CD4-positive, alpha-beta memory T cell (primary cell): ENCODE measurements at regions of chr1 and their contacts with region 1.

Region 1: GRCh38 chr1:115595279-115596079 is 46.3 kb upstream of the VANGL1 start:
- DNase-seq: peak in 4 of 5 donors; percentile 14 to 46 (median 24)
- H3K4me3 ChIP-seq: no peak overlapping the region
- H3K4me3 Mint-ChIP-seq: no peak overlapping the region
- H3K27ac ChIP-seq: no peak overlapping the region
- H3K27ac Mint-ChIP-seq: no peak overlapping the region
- H3K4me1 ChIP-seq: no peaks in the 10 kb centered on the region
- H3K4me1 Mint-ChIP-seq: no peaks in the 10 kb centered on the region
- H3K27me3 ChIP-seq: no peaks in the 10 kb centered on the region
- H3K27me3 Mint-ChIP-seq: peaks cover 1 to 4% of the 10 kb centered on the region in 2 donors

Region 2: GRCh38 chr1:114979278-114979891 is 616.1 kb before region 1 on chr1:
- CTCF ChIA-PET with region 1: no interaction called
- POLR2A ChIA-PET with region 1: no interaction called
- intact Hi-C with region 1: loop called (anchors 5 kb)
- DNase-seq: peak; percentile 57 to 67 (median 64)
- H3K4me3 ChIP-seq: no peak overlapping the region
- H3K4me3 Mint-ChIP-seq: no peak overlapping the region
- H3K27ac ChIP-seq: no peak overlapping the region
- H3K27ac Mint-ChIP-seq: no peak overlapping the region
- H3K4me1 ChIP-seq: no peaks in the 10 kb centered on the region
- H3K4me1 Mint-ChIP-seq: no peaks in the 10 kb centered on the region
- H3K27me3 ChIP-seq: no peaks in the 10 kb centered on the region
- H3K27me3 Mint-ChIP-seq: peaks cover 10 to 12% of the 10 kb centered on the region in 2 donors